GM12878 (cell line): ENCODE measurements at regions of chr1 and their contacts with region 1.

Region 1: GRCh38 chr1:10507111-10507879 is 32.5 kb downstream of the PEX14 start:
- DNase-seq: no peak
- ATAC-seq: peak; percentile 74
- H3K4me3 ChIP-seq: no peak overlapping the region
- H3K27ac ChIP-seq: peak overlapping the region; percentile 38
- H3K4me1 ChIP-seq: peaks cover 27% of the 10 kb centered on the region
- H3K27me3 ChIP-seq: no peaks in the 10 kb centered on the region
- CTCF ChIP-seq: peak; percentile 84 to 95 (median 88)
- EP300 ChIP-seq: no peak
- POLR2A ChIP-seq: no peak
- RAD21 ChIP-seq: peak; percentile 87

Region 2: GRCh38 chr1:10494754-10495474 is 12.4 kb before region 1 on chr1:
- CTCF ChIA-PET with region 1: interaction called, 117 read pairs
- POLR2A ChIA-PET with region 1: interaction called, 5 read pairs
- RAD21 ChIA-PET with region 1: interaction called, 23 read pairs
- SMC1A ChIA-PET with region 1: interaction called, 71 read pairs
- in situ Hi-C with region 1: no loop called
- intact Hi-C with region 1: no loop called
- DNase-seq: peak; percentile 88
- ATAC-seq: peak; percentile 96
- H3K4me3 ChIP-seq: peak overlapping the region; percentile 56
- H3K27ac ChIP-seq: peak overlapping the region; percentile 83
- H3K4me1 ChIP-seq: peaks cover 25% of the 10 kb centered on the region
- H3K27me3 ChIP-seq: no peaks in the 10 kb centered on the region
- CTCF ChIP-seq: peak; percentile 88 to 93 (median 92)
- EP300 ChIP-seq: peak; percentile 38 to 61; a peak in 1 of 4 replicates
- POLR2A ChIP-seq: no peak
- RAD21 ChIP-seq: peak; percentile 82

Region 3: DNA sequence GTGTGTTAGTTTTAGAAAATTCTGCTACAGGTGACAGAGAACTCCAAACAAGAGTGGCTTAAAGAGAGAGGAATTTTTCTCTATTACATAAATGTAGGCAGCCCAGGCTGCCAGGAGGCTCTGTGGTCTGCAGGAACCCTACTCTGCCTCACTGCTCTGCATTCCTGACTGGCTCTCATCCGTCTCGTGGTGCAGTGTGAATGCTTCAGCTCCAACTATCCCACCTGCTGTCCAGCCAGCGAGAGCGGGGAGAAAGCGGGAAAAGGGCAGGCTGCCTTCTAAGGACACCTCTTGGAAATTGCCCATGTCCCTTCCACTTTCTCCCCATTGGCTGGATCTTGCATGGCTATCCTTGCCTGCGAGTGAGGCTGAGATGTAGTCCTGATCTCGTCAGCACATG is 98.8 kb after region 1 on chr1:
- CTCF ChIA-PET with region 1: interaction called, 6 read pairs
- POLR2A ChIA-PET with region 1: no interaction called
- RAD21 ChIA-PET with region 1: no interaction called
- SMC1A ChIA-PET with region 1: interaction called, 3 read pairs
- in situ Hi-C with region 1: no loop called
- intact Hi-C with region 1: loop called (anchors 10 kb)
- DNase-seq: no peak
- ATAC-seq: no peak
- H3K4me3 ChIP-seq: no peak overlapping the region
- H3K27ac ChIP-seq: no peak overlapping the region
- H3K4me1 ChIP-seq: no peaks in the 10 kb centered on the region
- H3K27me3 ChIP-seq: no peaks in the 10 kb centered on the region
- CTCF ChIP-seq: no peak
- EP300 ChIP-seq: no peak
- POLR2A ChIP-seq: no peak
- RAD21 ChIP-seq: no peak

Region 4: DNA sequence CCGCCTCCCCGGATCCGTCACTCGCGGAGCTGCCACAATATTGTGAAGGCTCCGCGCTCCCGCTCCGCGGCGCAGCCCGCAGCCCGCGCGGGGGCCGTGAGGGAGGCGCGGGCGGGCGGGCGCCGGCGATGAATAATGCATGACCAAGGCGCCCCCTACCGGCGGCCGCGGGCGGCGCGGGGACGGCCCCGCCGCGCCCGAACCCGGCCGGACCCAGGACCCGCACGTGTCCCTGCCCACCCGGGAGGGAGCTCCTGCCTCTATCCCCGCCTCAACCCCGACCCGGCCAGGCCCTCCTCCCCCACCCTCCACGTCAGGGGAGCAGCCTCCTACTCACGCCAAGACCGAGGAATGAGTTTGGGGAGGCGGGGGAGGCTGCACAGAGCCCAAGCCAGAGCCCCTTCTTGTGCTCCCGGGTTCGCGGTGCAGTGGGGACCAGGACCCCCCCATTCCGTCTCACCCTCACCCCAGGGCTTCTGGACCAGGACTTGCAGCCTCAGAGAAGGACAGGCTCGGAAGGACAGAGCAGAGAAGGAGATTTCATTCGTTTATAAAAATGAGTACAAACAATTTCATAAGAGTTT is 359.9 kb after region 1 on chr1:
- CTCF ChIA-PET with region 1: interaction called, 29 read pairs
- POLR2A ChIA-PET with region 1: no interaction called
- RAD21 ChIA-PET with region 1: interaction called, 7 read pairs
- SMC1A ChIA-PET with region 1: interaction called, 13 read pairs
- in situ Hi-C with region 1: loop called (anchors 5 kb)
- intact Hi-C with region 1: loop called (anchors 2 kb)
- DNase-seq: no peak
- ATAC-seq: peak; percentile 96
- H3K4me3 ChIP-seq: peak overlapping the region; percentile 20; the same call in 1 of the 2 replicates
- H3K27ac ChIP-seq: no peak overlapping the region
- H3K4me1 ChIP-seq: 0 out of 2 replicates have a peak, but pooled peaks cover 5% of the 10 kb centered on the region
- H3K27me3 ChIP-seq: peaks cover 2 to 6% of the 10 kb centered on the region in 2 experiments; a peak in 3 of 4 replicates
- CTCF ChIP-seq: peak; percentile 41 to 68 (median 51); a peak in 5 of 6 replicates
- EP300 ChIP-seq: no peak
- POLR2A ChIP-seq: no peak
- RAD21 ChIP-seq: peak; percentile 67

Region 5: DNA sequence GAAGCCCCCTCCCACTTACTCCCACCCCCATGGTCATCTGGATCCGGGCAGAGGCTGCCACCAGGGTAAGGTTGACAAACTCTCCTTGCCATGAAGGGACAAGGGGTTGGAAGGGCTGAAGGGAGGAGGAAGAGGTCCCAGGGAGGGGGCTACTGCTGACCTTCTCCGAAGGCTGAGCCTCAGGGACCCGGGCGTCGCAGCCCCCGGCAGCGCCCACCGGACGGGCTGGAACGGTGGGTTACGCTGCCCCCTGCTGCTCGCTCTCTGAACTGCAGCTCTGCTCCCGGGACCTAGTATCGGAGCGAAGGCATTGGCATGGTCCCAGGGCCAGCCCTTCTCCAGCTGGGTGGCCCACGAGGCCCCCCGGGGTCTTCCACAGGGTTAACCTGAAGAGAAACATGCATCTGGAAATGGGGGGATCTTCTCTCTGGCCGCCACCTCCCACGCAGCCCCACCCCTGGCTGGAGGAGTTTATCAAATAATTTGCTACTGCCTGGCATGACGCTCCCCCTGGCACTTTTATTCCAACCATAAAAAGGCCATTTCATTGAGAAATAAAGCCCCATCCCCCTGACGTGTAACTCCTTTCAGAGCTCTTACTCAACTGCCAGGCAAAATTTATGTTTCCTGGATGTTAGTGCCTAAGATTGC is 434.7 kb after region 1 on chr1:
- CTCF ChIA-PET with region 1: interaction called, 9 read pairs
- POLR2A ChIA-PET with region 1: no interaction called
- RAD21 ChIA-PET with region 1: interaction called, 6 read pairs
- SMC1A ChIA-PET with region 1: no interaction called
- in situ Hi-C with region 1: loop called (anchors 5 kb)
- intact Hi-C with region 1: loop called (anchors 2 kb)
- DNase-seq: no peak
- ATAC-seq: peak; percentile 55
- H3K4me3 ChIP-seq: no peak overlapping the region
- H3K27ac ChIP-seq: no peak overlapping the region
- H3K4me1 ChIP-seq: peaks cover 21% of the 10 kb centered on the region
- H3K27me3 ChIP-seq: peaks cover 4 to 8% of the 10 kb centered on the region in 2 experiments; a peak in 3 of 4 replicates
- CTCF ChIP-seq: peak; percentile 74 to 98 (median 93)
- EP300 ChIP-seq: no peak
- POLR2A ChIP-seq: no peak
- RAD21 ChIP-seq: peak; percentile 70

Region 6: GRCh38 chr1:10986525-10986890 is 479.2 kb after region 1 on chr1:
- CTCF ChIA-PET with region 1: no interaction called
- POLR2A ChIA-PET with region 1: no interaction called
- RAD21 ChIA-PET with region 1: interaction called, 3 read pairs
- SMC1A ChIA-PET with region 1: no interaction called
- in situ Hi-C with region 1: no loop called
- intact Hi-C with region 1: loop called (anchors 1 kb)
- DNase-seq: peak; percentile 61
- ATAC-seq: peak; percentile 64
- H3K4me3 ChIP-seq: peak overlapping the region; percentile 2; the same call in 1 of the 2 replicates
- H3K27ac ChIP-seq: peak overlapping the region; percentile 92
- H3K4me1 ChIP-seq: peaks cover 39% of the 10 kb centered on the region
- H3K27me3 ChIP-seq: no peaks in the 10 kb centered on the region
- CTCF ChIP-seq: no peak
- EP300 ChIP-seq: peak in 1 of 2 experiments; percentile 52; a peak in 1 of 4 replicates
- POLR2A ChIP-seq: no peak
- RAD21 ChIP-seq: no peak